ENCODE measurements at regions of chr17 and their contacts with region 1.

Region 1: GRCh38 chr17:8138672-8139371 is 13.4 kb downstream of the PER1 start:
- DNase-seq: peak; percentile 94
- ATAC-seq: peak; percentile 93
- H3K4me3 ChIP-seq: peak overlapping the region; percentile 72
- H3K27ac ChIP-seq: peak overlapping the region; percentile 97
- H3K4me1 ChIP-seq: peaks cover 7% of the 10 kb centered on the region
- H3K27me3 ChIP-seq: no peaks in the 10 kb centered on the region
- CTCF ChIP-seq: peak; percentile 68 to 78 (median 76)
- EP300 ChIP-seq: 0 out of 4 replicates have a peak, but pooled peaks of 1 of the 2 experiments have one; percentile 4
- POLR2A ChIP-seq: peak; percentile 81
- RAD21 ChIP-seq: peak; percentile 57

Region 2: GRCh38 chr17:7818746-7819645 is 319.8 kb before region 1 on chr17:
- CTCF ChIA-PET with region 1: no interaction called
- POLR2A ChIA-PET with region 1: no interaction called
- RAD21 ChIA-PET with region 1: no interaction called
- SMC1A ChIA-PET with region 1: no interaction called
- in situ Hi-C with region 1: no loop called
- intact Hi-C with region 1: no loop called
- DNase-seq: no peak
- ATAC-seq: no peak
- H3K4me3 ChIP-seq: no peak overlapping the region
- H3K27ac ChIP-seq: no peak overlapping the region
- H3K4me1 ChIP-seq: no peaks in the 10 kb centered on the region
- H3K27me3 ChIP-seq: peaks cover 0 to 2% of the 10 kb centered on the region in 2 experiments; a peak in 2 of 4 replicates
- CTCF ChIP-seq: no peak
- EP300 ChIP-seq: no peak
- POLR2A ChIP-seq: no peak
- RAD21 ChIP-seq: no peak

Region 3: GRCh38 chr17:8125157-8125946 is 13.5 kb before region 1 on chr17:
- CTCF ChIA-PET with region 1: interaction called, 40 read pairs
- POLR2A ChIA-PET with region 1: interaction called, 20 read pairs
- RAD21 ChIA-PET with region 1: interaction called, 32 read pairs
- SMC1A ChIA-PET with region 1: interaction called, 26 read pairs
- in situ Hi-C with region 1: no loop called
- intact Hi-C with region 1: loop called (anchors 1 kb)
- DNase-seq: peak; percentile 64
- ATAC-seq: peak; percentile 27
- H3K4me3 ChIP-seq: peak overlapping the region; percentile 99
- H3K27ac ChIP-seq: no peak overlapping the region; the same call in 1 of the 2 replicates
- H3K4me1 ChIP-seq: peaks cover 36% of the 10 kb centered on the region
- H3K27me3 ChIP-seq: peaks cover 5 to 9% of the 10 kb centered on the region in 2 experiments
- CTCF ChIP-seq: no peak
- EP300 ChIP-seq: no peak
- POLR2A ChIP-seq: no peak
- RAD21 ChIP-seq: no peak

Region 4: GRCh38 chr17:8156246-8156992 is 17.6 kb after region 1 on chr17:
- CTCF ChIA-PET with region 1: interaction called, 37 read pairs
- POLR2A ChIA-PET with region 1: interaction called, 37 read pairs
- RAD21 ChIA-PET with region 1: interaction called, 33 read pairs
- SMC1A ChIA-PET with region 1: interaction called, 42 read pairs
- in situ Hi-C with region 1: no loop called
- intact Hi-C with region 1: loop called (anchors 1 kb)
- DNase-seq: peak; percentile 100
- ATAC-seq: peak; percentile 83
- H3K4me3 ChIP-seq: peak overlapping the region; percentile 86
- H3K27ac ChIP-seq: peak overlapping the region; percentile 94
- H3K4me1 ChIP-seq: peaks cover 21% of the 10 kb centered on the region
- H3K27me3 ChIP-seq: no peaks in the 10 kb centered on the region
- CTCF ChIP-seq: peak in 1 of 3 experiments; percentile 23; a peak in 1 of 6 replicates
- EP300 ChIP-seq: peak; percentile 0 to 53; a peak in 3 of 4 replicates
- POLR2A ChIP-seq: peak; percentile 87
- RAD21 ChIP-seq: no peak

Region 5: GRCh38 chr17:8173056-8173870 is 34.4 kb after region 1 on chr17:
- CTCF ChIA-PET with region 1: interaction called, 10 read pairs
- POLR2A ChIA-PET with region 1: interaction called, 6 read pairs
- RAD21 ChIA-PET with region 1: interaction called, 3 read pairs
- SMC1A ChIA-PET with region 1: interaction called, 4 read pairs
- in situ Hi-C with region 1: no loop called
- intact Hi-C with region 1: loop called (anchors 1 kb)
- DNase-seq: peak; percentile 98
- ATAC-seq: peak; percentile 86
- H3K4me3 ChIP-seq: peak overlapping the region; percentile 65
- H3K27ac ChIP-seq: peak overlapping the region; percentile 99
- H3K4me1 ChIP-seq: peaks cover 14% of the 10 kb centered on the region
- H3K27me3 ChIP-seq: no peaks in the 10 kb centered on the region
- CTCF ChIP-seq: no peak
- EP300 ChIP-seq: peak in 1 of 2 experiments; percentile 59; a peak in 2 of 4 replicates
- POLR2A ChIP-seq: peak; percentile 99
- RAD21 ChIP-seq: no peak

Region 6: DNA sequence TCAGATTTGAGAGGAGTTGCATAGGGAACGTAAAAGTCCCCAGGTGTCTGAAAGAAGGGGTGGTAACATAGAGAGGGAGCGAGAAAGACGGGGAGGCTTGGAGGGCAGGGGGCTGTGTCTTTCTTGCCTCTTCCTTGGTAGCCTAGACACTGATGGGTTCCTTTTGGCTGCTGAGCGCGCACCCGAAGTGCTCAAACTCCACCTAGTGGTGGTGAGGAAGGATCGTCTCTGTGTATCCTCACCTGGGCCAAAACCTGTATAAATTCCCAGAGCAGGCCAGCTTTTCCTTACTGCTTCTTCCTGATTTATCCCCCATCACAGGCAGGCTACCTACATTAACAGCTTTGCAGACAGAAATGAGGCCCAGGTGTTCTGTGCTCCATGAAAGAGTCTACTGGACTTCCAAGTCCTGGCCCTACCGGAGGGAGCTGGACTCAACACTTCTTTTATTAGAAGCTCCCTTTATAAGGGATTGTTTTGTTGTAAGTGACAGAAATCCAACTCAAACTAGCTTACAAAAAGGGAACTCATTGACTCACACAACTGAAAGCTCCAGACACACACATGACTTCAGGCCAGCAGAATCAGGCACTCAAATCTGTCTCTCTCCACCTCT is 161.9 kb after region 1 on chr17:
- CTCF ChIA-PET with region 1: interaction called, 11 read pairs
- POLR2A ChIA-PET with region 1: no interaction called
- RAD21 ChIA-PET with region 1: interaction called, 7 read pairs
- SMC1A ChIA-PET with region 1: interaction called, 4 read pairs
- in situ Hi-C with region 1: no loop called
- intact Hi-C with region 1: loop called (anchors 5 kb)
- DNase-seq: peak; percentile 31
- ATAC-seq: peak; percentile 98
- H3K4me3 ChIP-seq: no peak overlapping the region
- H3K27ac ChIP-seq: no peak overlapping the region
- H3K4me1 ChIP-seq: no peaks in the 10 kb centered on the region
- H3K27me3 ChIP-seq: no peaks in the 10 kb centered on the region
- CTCF ChIP-seq: peak; percentile 86 to 96 (median 90); a peak in 5 of 6 replicates
- EP300 ChIP-seq: no peak
- POLR2A ChIP-seq: no peak
- RAD21 ChIP-seq: peak; percentile 90

Measured in GM12878 (cell line).